Ascending aorta (tissue), 2 donors: ENCODE measurements at regions of chr6 and their contacts with region 1.

Region 1: GRCh38 chr6:131949909-131950766 is 1.0 kb downstream of the CCN2 start:
- DNase-seq: peak; percentile 14 to 85
- H3K4me3 ChIP-seq: peak overlapping the region; percentile 84 to 86
- H3K27ac ChIP-seq: peak overlapping the region; percentile 92 to 94
- H3K4me1 ChIP-seq: peaks cover 3 to 23% of the 10 kb centered on the region in 2 donors
- H3K27me3 ChIP-seq: no peaks in the 10 kb centered on the region
- CTCF ChIP-seq: peak; percentile 37 to 58 (median 46)

Region 2: GRCh38 chr6:131548441-131548840 is 401.7 kb before region 1 on chr6:
- intact Hi-C with region 1: no loop called
- DNase-seq: no peak
- H3K4me3 ChIP-seq: no peak overlapping the region
- H3K27ac ChIP-seq: no peak overlapping the region
- H3K4me1 ChIP-seq: no peaks in the 10 kb centered on the region
- H3K27me3 ChIP-seq: no peaks in the 10 kb centered on the region
- CTCF ChIP-seq: no peak

Region 3: GRCh38 chr6:131761060-131761761 is 188.9 kb before region 1 on chr6:
- intact Hi-C with region 1: loop called (anchors 5 kb)
- DNase-seq: no peak
- H3K4me3 ChIP-seq: no peak overlapping the region
- H3K27ac ChIP-seq: peak overlapping the region; percentile 49 to 56
- H3K4me1 ChIP-seq: peaks cover 6 to 34% of the 10 kb centered on the region in 2 donors
- H3K27me3 ChIP-seq: no peaks in the 10 kb centered on the region
- CTCF ChIP-seq: no peak

Region 4: DNA sequence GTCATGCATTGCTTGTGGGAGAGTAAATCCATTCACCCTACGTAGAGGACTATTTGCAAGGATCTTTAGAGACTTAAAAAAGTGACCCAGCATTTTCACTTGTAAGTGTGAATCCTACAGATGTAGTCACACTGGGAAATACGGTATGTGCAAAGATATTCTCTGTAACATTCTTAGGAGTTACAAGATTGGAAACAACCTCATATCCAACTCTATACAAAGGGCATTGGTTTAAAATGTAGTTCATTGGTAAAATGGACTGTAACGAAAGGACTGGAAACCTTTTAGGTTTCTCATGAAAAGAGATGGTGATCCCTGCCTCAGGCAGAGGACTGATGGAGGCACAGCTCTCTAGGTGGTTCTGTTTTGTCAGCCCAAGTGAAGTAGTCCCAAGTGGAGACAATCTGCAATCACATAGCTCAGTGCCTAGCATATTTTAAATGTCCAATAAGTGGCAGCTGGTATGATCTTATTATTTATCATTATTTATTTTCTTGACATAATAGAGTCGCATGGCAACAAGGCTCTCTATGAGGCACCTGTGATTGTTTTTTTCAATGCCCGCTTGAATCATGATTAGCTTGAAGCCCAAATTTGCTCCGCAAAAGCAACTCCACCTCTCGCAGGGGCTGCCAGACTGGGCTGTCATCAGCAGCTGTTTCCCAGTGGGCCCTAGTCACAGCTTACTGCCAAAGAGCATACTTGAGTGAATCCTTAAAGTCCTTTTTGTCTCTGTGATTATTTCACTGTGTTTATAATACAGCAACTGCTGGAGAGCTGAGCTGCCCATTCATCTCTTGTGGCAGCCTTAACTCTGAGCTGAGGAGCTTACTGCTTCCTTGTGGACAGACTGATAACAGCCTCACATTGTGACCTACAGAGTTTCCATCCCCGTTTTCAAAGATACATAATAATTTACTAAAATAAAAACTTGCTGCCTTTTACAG is 162.1 kb before region 1 on chr6:
- intact Hi-C with region 1: no loop called
- DNase-seq: no peak
- H3K4me3 ChIP-seq: no peak overlapping the region
- H3K27ac ChIP-seq: no peak overlapping the region
- H3K4me1 ChIP-seq: peaks cover 0 to 5% of the 10 kb centered on the region in 2 donors
- H3K27me3 ChIP-seq: no peaks in the 10 kb centered on the region
- CTCF ChIP-seq: peak; percentile 25 to 57 (median 31)

Region 5: DNA sequence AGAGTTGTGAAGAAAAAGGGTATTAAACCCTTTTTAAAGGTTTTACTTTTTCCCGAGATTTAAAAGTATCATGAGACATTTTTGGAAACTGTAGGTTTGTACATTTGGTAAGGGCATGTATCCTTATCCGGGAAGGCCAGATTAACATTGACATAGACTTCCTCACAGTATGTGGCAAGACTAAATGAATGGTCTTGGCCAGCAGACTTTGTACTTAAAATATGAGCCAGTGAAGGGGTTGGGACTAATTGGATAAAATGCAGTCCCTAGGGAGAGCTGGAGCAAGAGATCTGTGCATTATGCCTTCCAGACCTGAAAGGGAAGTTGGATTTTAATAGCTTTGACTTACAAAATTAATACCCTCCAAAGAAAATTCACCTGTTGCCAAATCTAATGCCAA is 61.4 kb after region 1 on chr6:
- intact Hi-C with region 1: loop called (anchors 2 kb)
- DNase-seq: no peak
- H3K4me3 ChIP-seq: peak overlapping the region in 1 of 2 donors; percentile 13
- H3K27ac ChIP-seq: peak overlapping the region; percentile 73 to 81
- H3K4me1 ChIP-seq: peaks cover 0 to 13% of the 10 kb centered on the region in 2 donors
- H3K27me3 ChIP-seq: no peaks in the 10 kb centered on the region
- CTCF ChIP-seq: no peak

Region 6: DNA sequence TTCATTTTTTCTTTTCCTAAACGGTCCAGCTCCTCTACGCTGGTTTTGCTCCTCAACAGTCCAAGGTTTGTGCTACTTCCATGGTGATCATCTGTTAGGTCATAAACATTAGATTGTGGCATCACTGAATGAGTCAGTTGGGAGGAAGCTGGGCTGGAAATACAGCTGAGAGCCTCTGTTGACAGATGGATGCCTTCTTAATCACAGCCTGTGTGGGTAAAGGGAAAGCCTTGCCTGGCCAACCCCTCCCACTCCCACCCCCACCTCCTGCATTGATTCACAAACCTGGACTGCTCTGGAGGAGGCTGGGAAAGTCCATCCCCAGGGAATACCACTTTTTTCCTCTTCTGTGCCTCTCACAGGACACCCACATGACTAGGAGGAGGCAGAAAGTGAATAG is 181.6 kb after region 1 on chr6:
- intact Hi-C with region 1: loop called (anchors 2 kb)
- DNase-seq: peak; percentile 33 to 93
- H3K4me3 ChIP-seq: peak overlapping the region; percentile 19 to 38
- H3K27ac ChIP-seq: peak overlapping the region; percentile 90 to 92
- H3K4me1 ChIP-seq: peaks cover 23 to 32% of the 10 kb centered on the region in 2 donors
- H3K27me3 ChIP-seq: no peaks in the 10 kb centered on the region
- CTCF ChIP-seq: no peak

Region 7: DNA sequence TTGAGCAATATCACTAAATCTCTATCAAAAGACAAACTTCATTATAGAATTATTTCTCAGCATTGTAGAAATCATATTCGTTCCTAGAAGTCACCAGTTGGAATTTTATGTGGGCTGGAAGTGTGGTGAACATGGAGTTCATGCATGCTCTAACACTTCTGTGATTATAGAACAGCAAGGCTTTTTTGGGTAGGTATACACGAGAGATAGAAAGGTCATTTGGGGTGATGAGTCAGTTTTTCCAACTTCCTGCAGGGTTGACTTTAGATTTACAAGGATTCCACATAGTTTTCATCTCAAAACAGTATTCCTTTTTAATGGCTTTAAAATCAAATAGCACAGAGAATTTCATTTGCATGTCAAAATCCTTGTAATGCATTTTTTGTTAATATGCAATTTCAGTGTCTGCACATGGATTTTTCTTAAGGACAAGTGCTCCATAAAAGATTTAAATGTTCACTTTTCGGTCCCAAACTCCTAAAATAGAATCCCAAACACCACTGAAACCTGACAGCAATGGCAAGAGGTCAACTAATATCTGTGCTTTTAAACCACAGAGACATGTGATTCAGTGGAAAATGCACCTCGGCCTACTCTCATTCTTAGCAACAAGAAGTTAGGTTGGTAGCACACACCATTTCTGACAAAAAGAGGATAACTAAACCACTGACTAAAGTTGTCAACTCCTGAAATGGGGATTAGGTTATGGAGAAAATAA is 240.1 kb after region 1 on chr6:
- intact Hi-C with region 1: loop called (anchors 10 kb)
- DNase-seq: no peak
- H3K4me3 ChIP-seq: no peak overlapping the region
- H3K27ac ChIP-seq: peak overlapping the region; percentile 64 to 79
- H3K4me1 ChIP-seq: peaks cover 0 to 24% of the 10 kb centered on the region in 2 donors
- H3K27me3 ChIP-seq: no peaks in the 10 kb centered on the region
- CTCF ChIP-seq: no peak